B cell (primary cell): ENCODE measurements at regions of chr13 and their contacts with region 1.

Region 1: DNA sequence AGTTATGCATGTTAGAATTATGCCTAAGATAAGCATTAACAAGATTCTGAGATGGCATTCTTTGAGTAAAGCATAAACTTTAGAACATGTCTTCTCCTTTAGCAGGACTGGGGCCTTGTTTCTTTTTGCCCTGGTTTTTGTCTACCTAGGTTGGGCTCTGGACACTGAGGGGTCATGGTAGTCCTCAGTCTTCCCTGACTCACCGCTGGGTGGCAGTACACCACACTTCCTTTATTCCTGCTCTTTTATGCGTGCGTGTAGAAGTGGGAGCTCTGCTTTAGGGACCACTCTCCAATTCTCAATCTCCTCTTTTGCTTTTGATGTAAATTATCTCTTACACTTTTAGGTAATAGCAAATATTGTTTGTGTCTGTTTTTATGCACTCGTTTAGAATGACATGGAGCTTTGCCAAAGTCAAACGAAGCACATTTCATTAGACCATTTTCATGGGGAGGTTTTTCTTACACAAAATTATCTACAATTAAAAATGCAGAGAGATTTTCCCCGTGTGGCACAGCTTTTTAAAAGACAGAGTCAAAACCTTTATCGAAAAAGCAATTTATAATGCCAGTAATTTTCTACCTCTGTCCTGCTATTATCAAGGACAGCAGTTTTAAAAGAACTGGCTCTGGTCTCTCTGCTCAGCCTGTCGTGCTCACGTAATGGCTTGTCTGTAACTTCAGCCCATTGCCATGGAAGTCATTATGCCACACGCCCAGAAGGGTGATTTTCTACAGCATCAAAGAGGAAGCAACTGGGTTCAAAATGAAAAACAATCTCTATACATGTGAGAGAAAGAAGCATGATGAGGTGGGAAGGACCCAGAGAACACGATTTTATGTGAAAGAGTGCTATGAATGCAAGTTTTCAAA is 413.9 kb downstream of the COG6 start:
- DNase-seq: peak; percentile 79
- ATAC-seq: peak; percentile 95
- H3K4me3 ChIP-seq: no peak overlapping the region
- H3K4me3 Mint-ChIP-seq: no peak overlapping the region
- H3K27ac ChIP-seq: no peak overlapping the region
- H3K27ac Mint-ChIP-seq: no peak overlapping the region
- H3K4me1 ChIP-seq: peaks cover 10 to 13% of the 10 kb centered on the region in 2 donors
- H3K4me1 Mint-ChIP-seq: peaks cover 11% of the 10 kb centered on the region
- H3K27me3 ChIP-seq: no peaks in the 10 kb centered on the region
- H3K27me3 Mint-ChIP-seq: no peaks in the 10 kb centered on the region
- CTCF ChIP-seq: peak; percentile 82

Region 2: GRCh38 chr13:39684531-39685137 is 384.8 kb before region 1 on chr13:
- CTCF ChIA-PET with region 1: interaction called, 6 read pairs
- POLR2A ChIA-PET with region 1: no interaction called
- intact Hi-C with region 1: loop called (anchors 10 kb)
- DNase-seq: peak; percentile 47
- ATAC-seq: no peak
- H3K4me3 ChIP-seq: no peak overlapping the region
- H3K4me3 Mint-ChIP-seq: no peak overlapping the region
- H3K27ac ChIP-seq: no peak overlapping the region
- H3K27ac Mint-ChIP-seq: no peak overlapping the region
- H3K4me1 ChIP-seq: peaks cover 0 to 7% of the 10 kb centered on the region in 2 donors
- H3K4me1 Mint-ChIP-seq: peaks cover 13% of the 10 kb centered on the region
- H3K27me3 ChIP-seq: no peaks in the 10 kb centered on the region
- H3K27me3 Mint-ChIP-seq: no peaks in the 10 kb centered on the region
- CTCF ChIP-seq: peak; percentile 77

Region 3: DNA sequence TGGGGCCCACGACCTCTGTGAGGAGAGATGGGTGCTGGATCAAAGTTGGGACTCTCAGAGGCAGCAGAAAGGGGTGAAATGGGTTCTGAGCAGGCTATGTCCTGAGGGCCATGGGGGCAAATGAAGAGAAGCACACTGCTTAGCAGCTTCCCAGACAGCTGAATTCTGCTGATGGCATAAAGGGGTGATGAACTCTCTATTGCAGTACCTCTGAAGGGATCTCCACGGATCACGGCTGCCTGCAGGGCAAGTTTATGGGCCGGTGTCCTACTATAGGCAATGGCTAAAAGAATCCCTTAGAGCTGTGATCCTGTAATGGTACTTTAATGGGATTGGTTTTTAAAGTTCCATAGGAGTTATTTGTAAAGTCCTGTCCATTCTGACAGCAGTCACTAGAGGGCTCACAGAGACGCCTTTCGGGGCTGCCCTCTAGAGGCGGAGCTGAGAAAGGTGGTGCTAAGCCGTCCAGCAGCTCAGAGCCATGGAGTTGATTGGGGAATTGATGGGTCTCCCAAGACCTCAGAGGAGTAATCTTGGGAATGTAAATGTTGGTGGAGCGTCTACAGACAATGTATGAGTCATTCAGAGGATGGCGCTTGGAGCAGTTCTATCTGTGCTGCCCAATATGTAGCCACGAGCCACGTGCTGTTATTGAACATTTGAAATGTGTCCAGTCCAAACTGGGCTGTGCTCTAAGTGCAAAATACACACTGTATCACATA is 126.7 kb before region 1 on chr13:
- CTCF ChIA-PET with region 1: interaction called, 21 read pairs
- POLR2A ChIA-PET with region 1: no interaction called
- intact Hi-C with region 1: loop called (anchors 1 kb)
- DNase-seq: peak; percentile 75
- ATAC-seq: peak; percentile 99
- H3K4me3 ChIP-seq: no peak overlapping the region
- H3K4me3 Mint-ChIP-seq: no peak overlapping the region
- H3K27ac ChIP-seq: no peak overlapping the region
- H3K27ac Mint-ChIP-seq: no peak overlapping the region
- H3K4me1 ChIP-seq: peaks cover 0 to 2% of the 10 kb centered on the region in 2 donors
- H3K4me1 Mint-ChIP-seq: peaks cover 1% of the 10 kb centered on the region
- H3K27me3 ChIP-seq: peaks cover 0 to 4% (median 0%) of the 10 kb centered on the region in 4 experiments
- H3K27me3 Mint-ChIP-seq: peaks cover 4% of the 10 kb centered on the region
- CTCF ChIP-seq: peak; percentile 98

Region 4: DNA sequence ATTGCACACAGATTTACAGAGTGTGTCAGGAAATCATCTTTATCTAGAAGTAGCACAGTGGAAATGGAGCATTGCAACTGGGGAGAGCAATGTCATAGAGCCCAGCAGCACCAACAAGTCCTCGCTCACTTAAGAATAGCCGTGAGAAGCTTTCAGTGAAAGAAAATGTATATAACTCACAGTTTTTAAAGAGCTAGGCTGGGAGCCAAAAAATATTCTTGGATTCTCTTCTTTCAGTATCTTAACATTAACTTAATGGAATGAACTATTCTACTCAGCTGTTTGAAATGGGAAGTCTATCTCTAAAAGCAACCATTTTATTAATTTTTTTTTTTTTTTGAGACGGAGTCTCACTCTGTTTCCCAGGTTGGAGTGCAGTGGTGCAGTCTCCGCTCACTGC is 84.3 kb before region 1 on chr13:
- CTCF ChIA-PET with region 1: no interaction called
- POLR2A ChIA-PET with region 1: no interaction called
- intact Hi-C with region 1: no loop called
- DNase-seq: no peak
- ATAC-seq: no peak
- H3K4me3 ChIP-seq: no peak overlapping the region
- H3K4me3 Mint-ChIP-seq: no peak overlapping the region
- H3K27ac ChIP-seq: no peak overlapping the region
- H3K27ac Mint-ChIP-seq: no peak overlapping the region
- H3K4me1 ChIP-seq: no peaks in the 10 kb centered on the region
- H3K4me1 Mint-ChIP-seq: no peaks in the 10 kb centered on the region
- H3K27me3 ChIP-seq: no peaks in the 10 kb centered on the region
- H3K27me3 Mint-ChIP-seq: peaks cover 19% of the 10 kb centered on the region
- CTCF ChIP-seq: no peak

Region 5: DNA sequence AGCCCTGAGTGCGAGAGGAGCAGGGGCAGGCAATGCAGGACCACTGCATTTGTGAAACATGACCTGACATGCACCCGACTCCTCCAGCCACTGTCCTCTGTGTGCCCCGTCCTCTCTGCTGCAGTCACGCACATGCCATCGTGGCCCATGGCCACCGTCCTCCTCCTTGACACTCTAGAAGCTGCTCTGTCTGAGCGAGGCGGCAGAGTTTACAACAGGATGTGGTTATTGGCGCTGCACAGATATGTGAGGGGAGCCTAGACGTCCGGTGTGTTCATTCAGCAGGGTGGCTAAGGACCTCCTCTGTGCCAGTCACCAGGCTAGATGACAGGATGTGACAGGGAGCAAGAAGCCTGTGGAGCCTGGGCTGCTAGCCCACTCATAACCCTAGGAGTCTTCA is 319.2 kb after region 1 on chr13:
- CTCF ChIA-PET with region 1: interaction called, 5 read pairs
- POLR2A ChIA-PET with region 1: no interaction called
- intact Hi-C with region 1: loop called (anchors 5 kb)
- DNase-seq: peak; percentile 80
- ATAC-seq: peak; percentile 94
- H3K4me3 ChIP-seq: peak overlapping the region in 4 of 5 experiments; percentile 9 to 66 (median 48)
- H3K4me3 Mint-ChIP-seq: peak overlapping the region; percentile 90
- H3K27ac ChIP-seq: peak overlapping the region; percentile 75 to 95
- H3K27ac Mint-ChIP-seq: peak overlapping the region; percentile 98
- H3K4me1 ChIP-seq: peaks cover 25 to 31% of the 10 kb centered on the region in 2 donors
- H3K4me1 Mint-ChIP-seq: peaks cover 26% of the 10 kb centered on the region
- H3K27me3 ChIP-seq: no peaks in the 10 kb centered on the region
- H3K27me3 Mint-ChIP-seq: no peaks in the 10 kb centered on the region
- CTCF ChIP-seq: no peak

Region 6: GRCh38 chr13:40433577-40433976 is 364.2 kb after region 1 on chr13:
- CTCF ChIA-PET with region 1: interaction called, 10 read pairs
- POLR2A ChIA-PET with region 1: interaction called, 3 read pairs
- intact Hi-C with region 1: no loop called
- DNase-seq: peak; percentile 71
- ATAC-seq: peak; percentile 64
- H3K4me3 ChIP-seq: no peak overlapping the region
- H3K4me3 Mint-ChIP-seq: peak overlapping the region; percentile 53
- H3K27ac ChIP-seq: peak overlapping the region; percentile 71 to 81
- H3K27ac Mint-ChIP-seq: peak overlapping the region; percentile 85
- H3K4me1 ChIP-seq: peaks cover 88 to 90% of the 10 kb centered on the region in 2 donors
- H3K4me1 Mint-ChIP-seq: peaks cover 86% of the 10 kb centered on the region
- H3K27me3 ChIP-seq: no peaks in the 10 kb centered on the region
- H3K27me3 Mint-ChIP-seq: no peaks in the 10 kb centered on the region
- CTCF ChIP-seq: no peak

Region 7: GRCh38 chr13:40671956-40672764 is 602.8 kb after region 1 on chr13:
- CTCF ChIA-PET with region 1: interaction called, 27 read pairs
- POLR2A ChIA-PET with region 1: interaction called, 3 read pairs
- intact Hi-C with region 1: loop called (anchors 5 kb)
- DNase-seq: no peak
- ATAC-seq: no peak
- H3K4me3 ChIP-seq: no peak overlapping the region
- H3K4me3 Mint-ChIP-seq: no peak overlapping the region
- H3K27ac ChIP-seq: no peak overlapping the region
- H3K27ac Mint-ChIP-seq: no peak overlapping the region
- H3K4me1 ChIP-seq: peaks cover 17 to 18% of the 10 kb centered on the region in 2 donors
- H3K4me1 Mint-ChIP-seq: peaks cover 25% of the 10 kb centered on the region
- H3K27me3 ChIP-seq: no peaks in the 10 kb centered on the region
- H3K27me3 Mint-ChIP-seq: no peaks in the 10 kb centered on the region
- CTCF ChIP-seq: no peak

Region 8: DNA sequence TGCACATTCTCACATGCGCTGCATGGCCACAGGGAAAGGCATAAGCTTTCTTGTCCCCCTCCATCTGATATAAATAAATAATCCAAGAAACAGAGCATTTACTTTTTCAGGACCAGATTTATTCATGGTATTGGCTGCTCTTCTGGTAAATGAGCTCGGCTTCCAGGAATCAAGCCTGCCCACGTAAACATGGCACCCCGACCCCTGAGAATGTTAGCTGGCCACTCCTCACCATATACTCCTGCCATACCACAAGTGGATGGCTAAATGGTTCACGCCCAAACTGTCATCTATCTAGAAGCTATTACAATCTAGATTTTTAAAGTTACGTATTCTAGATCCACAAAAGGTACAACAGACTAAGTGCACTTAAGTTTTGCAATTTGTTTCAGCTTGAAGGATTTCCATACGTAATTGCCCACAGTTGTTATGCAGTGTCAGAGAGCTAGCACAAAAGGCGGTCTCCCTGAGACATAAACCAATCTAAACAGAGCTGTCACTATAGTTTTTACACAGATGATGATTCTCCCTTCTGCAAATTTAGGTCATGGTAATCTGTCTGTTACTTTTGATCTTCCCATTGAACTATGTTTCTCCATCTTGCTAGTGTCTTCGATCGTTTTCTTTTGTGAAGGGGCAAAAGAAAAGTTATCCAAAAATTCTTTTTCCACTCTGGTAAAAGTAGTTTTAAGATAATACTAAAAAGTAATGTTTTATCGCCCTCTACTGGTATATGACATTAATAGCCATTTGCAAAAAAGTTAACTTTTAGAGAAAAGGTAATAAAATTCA is 613.2 kb after region 1 on chr13:
- CTCF ChIA-PET with region 1: interaction called, 204 read pairs
- POLR2A ChIA-PET with region 1: interaction called, 4 read pairs
- intact Hi-C with region 1: loop called (anchors 1 kb)
- DNase-seq: peak; percentile 55
- ATAC-seq: peak; percentile 45
- H3K4me3 ChIP-seq: no peak overlapping the region
- H3K4me3 Mint-ChIP-seq: peak overlapping the region; percentile 23
- H3K27ac ChIP-seq: no peak overlapping the region
- H3K27ac Mint-ChIP-seq: no peak overlapping the region
- H3K4me1 ChIP-seq: peaks cover 19 to 22% of the 10 kb centered on the region in 2 donors
- H3K4me1 Mint-ChIP-seq: peaks cover 19% of the 10 kb centered on the region
- H3K27me3 ChIP-seq: no peaks in the 10 kb centered on the region
- H3K27me3 Mint-ChIP-seq: no peaks in the 10 kb centered on the region
- CTCF ChIP-seq: peak; percentile 91